Thyroid gland (tissue), 4 donors: ENCODE measurements at regions of chr2 and their contacts with region 1.

Region 1: DNA sequence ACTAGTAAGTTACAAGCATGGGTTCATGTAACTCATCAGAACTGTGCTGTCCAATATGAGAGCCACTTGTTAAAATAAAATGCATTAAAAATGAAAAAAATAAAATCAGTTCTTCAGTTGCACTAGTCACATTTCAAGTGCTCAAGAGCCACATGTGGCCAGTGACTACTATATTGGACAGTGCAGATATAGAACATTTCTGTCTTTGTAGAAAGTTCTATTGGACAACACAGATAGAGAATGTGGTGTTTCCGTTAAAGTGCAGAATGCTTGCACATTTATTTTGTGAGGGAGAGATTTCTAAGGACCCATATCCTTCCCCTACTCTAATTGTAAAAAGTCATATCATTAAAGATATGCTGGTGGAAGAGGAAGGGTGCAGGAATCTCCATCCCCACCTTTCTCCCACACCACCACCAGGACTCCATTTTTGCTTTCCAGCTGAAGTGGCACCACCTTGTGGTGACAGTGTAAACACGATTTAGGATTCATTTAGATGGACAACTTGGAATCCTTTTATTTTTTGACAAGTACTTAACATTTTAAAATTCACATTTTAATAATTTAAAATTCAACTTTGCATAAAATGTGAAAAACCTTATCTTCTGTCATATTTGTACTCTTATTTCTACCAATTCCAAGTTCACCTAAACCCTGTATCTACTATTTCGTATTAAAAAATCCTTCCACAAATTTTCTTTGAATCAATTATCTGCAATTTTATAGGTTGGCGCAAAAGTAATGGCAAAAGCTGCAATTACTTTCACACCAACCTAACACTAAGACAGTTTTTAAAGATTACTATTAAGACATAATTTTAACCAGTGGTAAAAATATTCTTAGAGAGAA is 9.4 kb upstream of the CD302 start:
- DNase-seq: peak; percentile 46 to 54
- H3K4me3 ChIP-seq: no peak overlapping the region
- H3K27ac ChIP-seq: no peak overlapping the region
- H3K4me1 ChIP-seq: no peaks in the 10 kb centered on the region
- H3K27me3 ChIP-seq: no peaks in the 10 kb centered on the region
- CTCF ChIP-seq: peak; percentile 58 to 92 (median 69)
- POLR2A ChIP-seq: no peak

Region 2: DNA sequence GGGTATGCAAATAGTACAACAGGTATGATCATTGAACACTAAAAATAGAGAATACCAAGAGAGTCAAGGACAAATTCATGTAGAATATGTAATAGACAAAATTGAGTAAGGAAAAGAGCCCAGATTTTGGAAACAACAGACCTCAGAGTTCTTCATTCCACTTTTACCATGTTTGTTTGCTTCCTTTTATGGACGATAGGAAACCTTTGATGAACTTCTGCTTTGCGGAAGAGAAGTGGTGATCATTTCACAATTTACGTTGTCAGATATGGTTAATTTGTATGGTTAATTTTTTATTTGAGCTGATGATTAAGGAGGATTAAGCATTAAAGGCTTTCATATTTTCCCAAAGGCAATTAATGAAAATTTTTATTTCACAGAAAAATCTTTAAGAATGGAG is 78.8 kb before region 1 on chr2:
- intact Hi-C with region 1: loop called (anchors 10 kb)
- DNase-seq: no peak
- H3K4me3 ChIP-seq: no peak overlapping the region
- H3K27ac ChIP-seq: no peak overlapping the region
- H3K4me1 ChIP-seq: peaks cover 0 to 6% of the 10 kb centered on the region in 2 donors
- H3K27me3 ChIP-seq: no peaks in the 10 kb centered on the region
- CTCF ChIP-seq: no peak
- POLR2A ChIP-seq: no peak

Region 3: DNA sequence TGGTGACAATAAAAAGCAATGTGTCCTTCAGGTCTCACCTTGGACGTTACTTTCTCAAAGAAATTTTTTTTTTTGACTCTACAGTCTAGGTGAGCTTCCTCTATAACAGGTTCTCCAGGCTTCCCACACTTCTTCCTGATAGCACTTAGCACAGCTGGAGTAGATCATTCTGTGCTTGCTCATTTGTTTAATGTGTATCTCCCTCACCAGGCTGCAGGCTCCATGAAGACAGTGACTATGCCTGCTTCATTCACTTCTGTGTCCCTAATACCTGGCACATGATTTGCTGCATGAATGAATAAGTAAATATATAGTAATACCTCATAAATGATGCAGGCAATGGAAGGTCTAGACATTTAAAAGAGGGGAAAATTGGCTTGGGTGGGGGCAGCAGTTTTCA is 100.5 kb after region 1 on chr2:
- intact Hi-C with region 1: no loop called
- DNase-seq: no peak
- H3K4me3 ChIP-seq: no peak overlapping the region
- H3K27ac ChIP-seq: no peak overlapping the region
- H3K4me1 ChIP-seq: peaks cover 0 to 10% of the 10 kb centered on the region in 2 donors
- H3K27me3 ChIP-seq: no peaks in the 10 kb centered on the region
- CTCF ChIP-seq: no peak
- POLR2A ChIP-seq: no peak